ENCODE measurements at regions of chr9 and their contacts with region 1.

Region 1: GRCh38 chr9:94718977-94719376 is 7.5 kb upstream of the AOPEP start:
- DNase-seq: no peak
- ATAC-seq: no peak
- H3K4me3 Mint-ChIP-seq: no peak overlapping the region
- H3K27ac Mint-ChIP-seq: no peak overlapping the region
- H3K4me1 Mint-ChIP-seq: no peaks in the 10 kb centered on the region
- H3K27me3 Mint-ChIP-seq: peaks cover 16% of the 10 kb centered on the region

Region 2: DNA sequence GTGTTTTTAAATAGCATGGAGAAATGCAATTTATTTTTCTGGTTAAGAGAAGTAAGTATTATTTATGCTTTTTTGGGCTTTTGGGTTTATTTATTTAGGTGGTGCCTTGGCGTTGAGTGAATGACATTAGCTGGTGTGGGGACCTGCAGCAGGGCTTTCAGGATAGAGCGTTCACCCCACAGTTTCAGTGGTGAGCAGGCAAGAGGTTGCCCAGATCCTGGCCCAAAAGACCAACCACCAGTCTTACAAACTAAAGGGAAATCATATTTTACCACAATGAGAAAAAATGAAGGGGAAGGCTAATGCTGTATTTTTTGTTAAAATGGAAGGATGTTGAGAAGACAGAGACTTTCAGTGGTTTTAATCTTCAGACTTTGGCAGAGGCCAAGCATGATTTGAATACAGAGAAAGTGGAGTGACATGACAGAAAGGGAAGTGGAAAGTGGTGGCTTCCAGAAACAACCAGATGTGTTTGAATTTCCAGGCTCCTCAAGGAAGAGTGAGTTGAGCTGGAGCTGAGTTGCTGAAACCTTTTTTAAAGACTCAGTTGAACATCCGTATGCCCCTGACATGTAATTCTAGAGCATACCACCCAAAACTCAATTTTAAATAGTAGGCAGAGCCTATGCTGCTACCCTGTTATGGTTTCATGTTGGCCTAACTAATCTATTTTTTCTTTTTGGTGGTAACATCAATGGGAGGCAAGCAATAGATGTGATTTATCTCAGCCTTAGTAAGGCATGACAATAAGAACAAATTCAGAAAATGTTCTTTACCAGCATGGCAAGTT is 102.3 kb after region 1 on chr9:
- CTCF ChIA-PET with region 1: no interaction called
- POLR2A ChIA-PET with region 1: interaction called, 10 read pairs
- intact Hi-C with region 1: no loop called
- DNase-seq: no peak
- ATAC-seq: peak; percentile 30
- H3K4me3 Mint-ChIP-seq: no peak overlapping the region
- H3K27ac Mint-ChIP-seq: no peak overlapping the region
- H3K4me1 Mint-ChIP-seq: peaks cover 5% of the 10 kb centered on the region
- H3K27me3 Mint-ChIP-seq: no peaks in the 10 kb centered on the region

Measured in activated CD4-positive, alpha-beta T cell treated with anti-CD3 and anti-CD28 coated beads for 36 hours (primary cell).